A549 (cell line): ENCODE measurements at regions of chr1 and their contacts with region 1.

Region 1: GRCh38 chr1:2044510-2045319 is 5.5 kb upstream of the PRKCZ start:
- DNase-seq: peak; percentile 39 to 53
- ATAC-seq: peak; percentile 53 to 70; a peak in 4 of 6 replicates
- H3K4me3 ChIP-seq: peak overlapping the region; percentile 29; the same call in 2 of the 3 replicates
- H3K27ac ChIP-seq: peak overlapping the region; percentile 56 to 89; a peak in 5 of 6 replicates
- H3K4me1 ChIP-seq: no peaks in the 10 kb centered on the region
- CTCF ChIP-seq: peak; percentile 66
- EP300 ChIP-seq: no peak
- POLR2A ChIP-seq: no peak
- RAD21 ChIP-seq: peak; percentile 52 to 70

Region 2: DNA sequence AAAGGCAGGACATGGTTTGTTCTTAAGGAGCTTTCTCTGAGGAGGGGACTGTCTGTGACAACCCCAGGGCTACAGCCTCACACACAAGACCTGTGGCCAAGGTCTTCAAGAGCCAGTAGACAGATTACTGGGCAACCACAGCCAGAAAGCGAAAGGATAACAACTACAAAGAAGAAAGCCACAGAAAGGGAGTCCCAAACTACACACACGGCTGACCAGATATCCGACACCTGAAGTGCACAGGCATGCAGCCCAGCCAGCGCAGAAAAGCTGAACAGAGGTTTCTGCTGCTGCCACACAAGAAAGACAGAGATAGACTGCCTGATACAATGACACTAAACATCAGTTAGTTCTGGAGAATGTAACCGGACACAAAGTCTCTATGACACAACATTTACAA is 245.0 kb before region 1 on chr1:
- CTCF ChIA-PET with region 1: no interaction called
- POLR2A ChIA-PET with region 1: no interaction called
- DNase-seq: no peak
- ATAC-seq: no peak
- H3K4me3 ChIP-seq: no peak overlapping the region
- H3K27ac ChIP-seq: no peak overlapping the region
- H3K4me1 ChIP-seq: no peaks in the 10 kb centered on the region
- CTCF ChIP-seq: no peak
- EP300 ChIP-seq: no peak
- POLR2A ChIP-seq: no peak
- RAD21 ChIP-seq: no peak

Region 3: DNA sequence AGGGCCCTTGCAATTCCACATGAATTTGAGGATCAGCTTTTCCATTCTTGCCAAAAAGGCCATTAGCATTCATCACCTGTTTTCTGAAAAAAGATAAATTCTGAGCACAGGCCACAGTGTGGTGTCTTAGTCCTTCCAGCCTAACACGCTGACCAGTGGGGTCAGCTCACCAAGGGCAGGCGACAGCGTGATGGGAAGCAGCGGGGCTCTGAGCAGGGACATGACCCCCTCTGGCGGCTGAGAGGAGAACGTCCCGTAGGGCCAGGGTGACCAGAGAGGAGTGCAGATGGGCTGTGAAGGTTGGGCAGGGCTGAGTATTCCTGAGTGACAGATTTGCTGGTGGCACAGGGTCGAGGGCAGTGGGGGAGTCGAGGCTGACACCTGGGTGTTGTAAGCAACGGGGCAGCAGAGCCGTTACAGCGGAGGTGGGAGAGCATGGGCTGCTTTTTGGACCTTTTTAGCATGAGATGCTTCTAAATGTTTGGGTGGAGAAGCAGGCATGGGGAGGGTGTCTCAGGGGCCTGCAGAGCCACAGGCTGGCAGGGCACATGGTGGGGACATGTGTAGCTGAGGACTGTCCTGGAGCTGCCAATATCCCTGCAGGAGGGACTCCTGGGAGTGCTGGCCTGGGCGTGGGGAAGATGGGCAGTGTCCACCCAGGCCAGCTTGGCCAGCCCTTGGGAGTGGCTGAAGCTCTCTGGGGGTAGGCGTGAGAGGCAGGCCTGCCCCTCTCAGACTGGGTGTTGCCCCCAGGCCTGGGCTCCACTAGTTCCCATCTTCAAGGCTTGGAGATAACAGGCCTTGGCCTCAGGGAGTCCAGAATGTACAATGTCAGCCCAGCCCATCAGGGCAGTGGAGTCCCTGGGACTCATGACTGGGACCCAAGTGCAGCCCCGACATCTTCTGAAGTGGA is 138.3 kb before region 1 on chr1:
- CTCF ChIA-PET with region 1: interaction called, 30 read pairs
- POLR2A ChIA-PET with region 1: no interaction called
- DNase-seq: peak; percentile 80 to 83
- ATAC-seq: peak; percentile 88 to 89
- H3K4me3 ChIP-seq: no peak overlapping the region
- H3K27ac ChIP-seq: peak overlapping the region; percentile 63 to 92; a peak in 5 of 6 replicates
- H3K4me1 ChIP-seq: peaks cover 25% of the 10 kb centered on the region
- CTCF ChIP-seq: peak; percentile 69
- EP300 ChIP-seq: no peak
- POLR2A ChIP-seq: no peak
- RAD21 ChIP-seq: peak; percentile 82 to 93

Region 4: GRCh38 chr1:1943834-1944570 is 100.7 kb before region 1 on chr1:
- CTCF ChIA-PET with region 1: interaction called, 127 read pairs
- POLR2A ChIA-PET with region 1: no interaction called
- DNase-seq: peak; percentile 64 to 71
- ATAC-seq: peak; percentile 94 to 97
- H3K4me3 ChIP-seq: 0 out of 3 replicates have a peak overlapping the region, but pooled peaks have one; percentile 11
- H3K27ac ChIP-seq: peak overlapping the region in 1 of 2 experiments; percentile 57; a peak in 3 of 6 replicates
- H3K4me1 ChIP-seq: no peaks in the 10 kb centered on the region
- CTCF ChIP-seq: peak; percentile 67
- EP300 ChIP-seq: no peak
- POLR2A ChIP-seq: no peak
- RAD21 ChIP-seq: peak; percentile 37 to 42; a peak in 3 of 5 replicates

Region 5: DNA sequence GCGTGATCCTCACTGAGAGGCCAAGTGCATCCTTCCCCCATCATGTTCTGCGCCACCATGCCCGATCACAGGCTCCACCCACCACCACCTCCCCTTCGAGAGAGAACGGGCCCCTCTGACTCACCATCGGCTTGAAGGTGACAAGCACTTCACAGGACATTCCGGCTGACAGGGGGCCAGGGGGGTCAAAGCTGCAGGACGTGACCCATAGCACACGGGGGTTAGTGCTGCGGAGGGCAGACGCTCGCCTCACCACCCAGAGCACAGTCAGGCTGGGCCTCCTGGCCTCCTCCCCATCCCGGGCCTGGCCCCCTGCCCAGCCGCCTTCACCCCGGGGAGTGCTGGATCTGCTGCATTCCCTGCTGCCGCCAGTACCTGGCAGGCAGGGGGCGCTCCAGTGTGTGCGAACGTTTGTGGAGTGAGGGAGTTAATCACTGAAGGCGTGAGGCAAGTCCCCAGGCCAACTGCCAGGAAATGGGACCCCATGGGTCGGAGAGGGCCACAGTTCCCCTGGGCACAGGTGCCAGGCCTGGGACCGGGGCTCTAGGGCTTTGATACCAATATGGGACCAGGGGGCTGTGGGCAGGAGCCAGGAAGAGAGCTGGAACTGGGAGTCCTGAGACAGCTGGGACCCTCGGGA is 84.8 kb before region 1 on chr1:
- CTCF ChIA-PET with region 1: interaction called, 126 read pairs
- POLR2A ChIA-PET with region 1: interaction called, 5 read pairs
- DNase-seq: peak; percentile 78 to 89
- ATAC-seq: peak; percentile 92 to 95
- H3K4me3 ChIP-seq: peak overlapping the region; percentile 36
- H3K27ac ChIP-seq: peak overlapping the region; percentile 21 to 29; a peak in 2 of 6 replicates
- H3K4me1 ChIP-seq: peaks cover 6% of the 10 kb centered on the region; the same call in 1 of the 3 replicates
- CTCF ChIP-seq: peak; percentile 75
- EP300 ChIP-seq: no peak
- POLR2A ChIP-seq: no peak
- RAD21 ChIP-seq: peak; percentile 62 to 71

Region 6: DNA sequence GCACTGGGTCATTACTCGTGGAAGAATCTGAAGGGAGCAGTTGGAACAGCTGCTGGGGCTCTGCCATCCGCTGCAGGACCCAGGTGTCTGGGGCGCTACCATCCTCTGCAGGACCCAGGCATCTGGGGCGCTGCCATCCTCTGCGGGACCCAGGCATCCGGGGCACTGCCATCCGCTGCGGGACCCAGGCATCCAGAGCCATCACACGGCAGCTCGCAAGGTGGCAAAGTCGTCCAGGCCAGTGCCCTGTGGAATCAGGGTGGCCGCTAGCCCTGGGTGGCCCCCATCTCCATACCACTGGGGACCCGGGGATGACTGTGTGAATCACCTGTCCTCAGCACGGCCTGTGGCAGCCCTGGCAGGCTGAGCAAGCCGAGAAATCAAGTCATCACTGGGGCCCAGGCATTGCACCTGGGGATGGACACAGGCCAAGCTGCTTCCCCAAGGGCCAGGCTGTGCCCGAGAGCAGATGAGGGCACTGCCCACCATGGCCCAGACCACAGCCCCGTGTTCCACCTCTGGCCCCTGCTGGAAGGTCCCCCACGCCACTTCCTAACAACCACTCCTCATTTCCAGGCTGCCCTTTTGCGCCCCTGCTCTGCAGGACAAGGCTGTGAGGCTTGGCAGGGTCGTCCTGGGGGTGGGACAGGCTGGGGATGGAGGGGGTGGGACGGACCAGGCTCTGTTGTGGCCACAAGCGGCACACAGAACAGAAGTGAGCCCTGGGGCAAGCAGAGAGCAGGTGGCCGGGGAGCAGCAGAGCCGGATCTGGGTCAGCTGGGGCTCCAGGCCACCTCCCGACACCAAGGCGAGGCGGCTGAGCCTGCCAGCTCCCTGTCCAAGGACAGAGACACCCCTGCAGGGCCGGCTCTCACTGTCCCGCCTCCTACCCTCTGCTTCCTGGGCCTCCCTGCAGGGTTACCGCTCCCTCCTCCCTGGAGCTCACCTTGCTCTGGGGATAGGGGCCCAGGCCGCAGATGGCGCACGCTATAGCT is 12.9 kb before region 1 on chr1:
- CTCF ChIA-PET with region 1: interaction called, 20 read pairs
- POLR2A ChIA-PET with region 1: no interaction called
- DNase-seq: no peak
- ATAC-seq: no peak; a peak in 1 of 6 replicates
- H3K4me3 ChIP-seq: no peak overlapping the region
- H3K27ac ChIP-seq: no peak overlapping the region
- H3K4me1 ChIP-seq: no peaks in the 10 kb centered on the region
- CTCF ChIP-seq: no peak
- EP300 ChIP-seq: no peak
- POLR2A ChIP-seq: no peak
- RAD21 ChIP-seq: no peak

Region 7: DNA sequence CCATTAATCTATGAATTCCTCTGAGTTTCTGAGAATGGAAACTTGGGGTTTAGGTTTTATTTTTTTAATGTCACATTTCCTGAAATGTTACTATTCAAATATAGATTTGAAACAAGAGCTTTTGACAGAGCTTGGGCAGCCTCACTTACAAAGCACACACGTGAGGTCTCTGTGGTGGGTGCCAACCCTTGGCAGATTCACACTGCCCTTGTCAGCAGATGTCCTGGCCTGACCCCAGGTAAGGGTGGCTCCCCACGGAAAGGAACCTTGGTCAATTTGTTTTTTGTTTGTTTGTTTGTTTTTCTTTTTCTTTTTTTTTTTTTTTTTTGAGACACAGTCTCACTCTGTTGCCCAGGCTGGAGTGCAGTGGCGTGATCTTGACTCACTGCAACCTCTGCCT is 96.3 kb after region 1 on chr1:
- CTCF ChIA-PET with region 1: interaction called, 10 read pairs
- POLR2A ChIA-PET with region 1: no interaction called
- DNase-seq: no peak
- ATAC-seq: no peak
- H3K4me3 ChIP-seq: no peak overlapping the region
- H3K27ac ChIP-seq: no peak overlapping the region
- H3K4me1 ChIP-seq: peaks cover 7% of the 10 kb centered on the region
- CTCF ChIP-seq: no peak
- EP300 ChIP-seq: no peak
- POLR2A ChIP-seq: no peak
- RAD21 ChIP-seq: no peak